ENCODE measurements at regions of chr15 and their contacts with region 1.

Region 1: GRCh38 chr15:42427429-42428223 is 63.3 kb downstream of the ZNF106 start:
- DNase-seq: no peak
- ATAC-seq: peak in 6 of 8 donors; percentile 37 to 83 (median 55)
- H3K4me3 ChIP-seq: no peak overlapping the region
- H3K27ac ChIP-seq: peak overlapping the region in 6 of 10 donors; percentile 33 to 64 (median 55)
- H3K4me1 ChIP-seq: peaks cover 0 to 13% (median 3%) of the 10 kb centered on the region in 9 donors
- H3K27me3 ChIP-seq: no peaks in the 10 kb centered on the region
- CTCF ChIP-seq: no peak

Region 2: DNA sequence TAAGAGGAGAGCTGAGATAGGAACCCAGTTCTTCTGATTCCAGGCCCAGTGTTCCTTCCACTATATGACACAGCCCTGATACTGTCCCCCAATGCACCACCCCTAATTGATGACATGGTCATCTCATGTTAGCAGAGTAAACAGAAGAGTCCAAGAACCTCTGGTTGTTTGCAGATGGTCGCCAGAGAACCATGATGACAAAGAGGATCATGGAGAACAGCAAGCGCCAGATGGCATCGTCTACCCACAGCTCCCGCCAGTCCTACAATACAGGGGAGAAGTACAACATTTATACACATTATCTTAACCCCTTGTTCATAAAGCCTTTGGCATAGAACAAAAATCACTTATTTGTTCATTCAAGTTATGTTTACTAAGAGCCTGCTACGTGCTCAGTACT is 201.0 kb before region 1 on chr15:
- intact Hi-C with region 1: loop called in 1 of 10 experiments (anchors 10 kb)
- DNase-seq: no peak
- ATAC-seq: no peak
- H3K4me3 ChIP-seq: no peak overlapping the region
- H3K27ac ChIP-seq: no peak overlapping the region
- H3K4me1 ChIP-seq: no peaks in the 10 kb centered on the region
- H3K27me3 ChIP-seq: no peaks in the 10 kb centered on the region
- CTCF ChIP-seq: no peak

Measured in heart right ventricle (tissue), 16 donors.